ENCODE measurements at regions of chr5 and their contacts with region 1.

Region 1: DNA sequence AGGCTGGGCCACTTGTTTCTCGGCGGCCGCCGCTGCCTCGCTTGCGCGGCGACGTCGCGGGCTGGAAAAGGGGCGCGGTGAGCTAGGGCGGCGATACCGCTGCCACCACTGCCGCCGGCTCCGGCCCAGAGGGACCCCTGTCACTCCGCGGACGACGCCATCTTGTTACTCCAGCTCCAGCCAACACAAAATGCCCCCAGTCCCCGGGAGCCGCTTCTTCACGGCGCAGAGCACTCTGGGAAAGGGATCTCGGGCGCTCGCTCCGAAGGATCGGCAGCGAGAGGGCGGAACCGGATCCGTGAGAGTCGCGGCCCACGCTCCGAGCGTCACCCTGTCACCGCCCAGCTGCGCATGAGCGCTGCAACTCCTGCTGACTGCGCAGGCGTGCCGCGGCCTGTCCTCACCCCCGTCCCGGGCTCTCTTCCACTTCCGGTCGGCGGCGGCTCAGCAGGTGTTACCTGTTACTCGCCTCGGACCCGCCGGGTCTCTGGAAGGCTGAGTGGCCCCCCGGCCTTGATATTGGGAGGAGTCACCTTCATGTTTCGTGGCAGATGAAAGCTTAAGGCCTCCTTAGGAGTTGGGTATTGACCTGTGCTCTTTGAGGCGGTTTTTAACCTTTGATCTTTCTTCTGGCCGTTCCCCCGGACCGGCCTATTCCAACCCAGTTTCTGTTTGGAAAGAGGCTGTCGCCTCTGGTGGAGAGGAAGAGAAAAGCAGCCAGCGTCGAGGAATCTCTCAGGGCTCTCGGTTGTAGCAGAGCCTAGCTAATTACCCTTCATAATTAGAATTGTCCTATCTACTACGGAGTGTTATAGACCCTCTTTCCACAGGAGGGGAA is at the start of gene CSNK1A1:
- DNase-seq: peak; percentile 99
- H3K4me3 Mint-ChIP-seq: peak within 1 kb of the TSS; percentile 97
- H3K27ac Mint-ChIP-seq: peak within 1 kb of the TSS; percentile 99
- H3K4me1 Mint-ChIP-seq: peaks cover 33% of the 10 kb centered on the region
- H3K27me3 Mint-ChIP-seq: no peaks in the 10 kb centered on the region
- total RNA-seq, gene CSNK1A1: 165 to 170 TPM

Region 2: GRCh38 chr5:148383564-148384379 is 1167.6 kb before region 1 on chr5 and contains the start of gene FBXO38:
- CTCF ChIA-PET with region 1: no interaction called
- POLR2A ChIA-PET with region 1: no interaction called
- intact Hi-C with region 1: loop called (anchors 10 kb)
- DNase-seq: peak; percentile 98
- H3K4me3 Mint-ChIP-seq: peak within 1 kb of the TSS; percentile 86
- H3K27ac Mint-ChIP-seq: peak within 1 kb of the TSS; percentile 92
- H3K4me1 Mint-ChIP-seq: peaks cover 53% of the 10 kb centered on the region
- H3K27me3 Mint-ChIP-seq: no peaks in the 10 kb centered on the region
- total RNA-seq, gene FBXO38: 43.1 to 45.0 TPM

Region 3: DNA sequence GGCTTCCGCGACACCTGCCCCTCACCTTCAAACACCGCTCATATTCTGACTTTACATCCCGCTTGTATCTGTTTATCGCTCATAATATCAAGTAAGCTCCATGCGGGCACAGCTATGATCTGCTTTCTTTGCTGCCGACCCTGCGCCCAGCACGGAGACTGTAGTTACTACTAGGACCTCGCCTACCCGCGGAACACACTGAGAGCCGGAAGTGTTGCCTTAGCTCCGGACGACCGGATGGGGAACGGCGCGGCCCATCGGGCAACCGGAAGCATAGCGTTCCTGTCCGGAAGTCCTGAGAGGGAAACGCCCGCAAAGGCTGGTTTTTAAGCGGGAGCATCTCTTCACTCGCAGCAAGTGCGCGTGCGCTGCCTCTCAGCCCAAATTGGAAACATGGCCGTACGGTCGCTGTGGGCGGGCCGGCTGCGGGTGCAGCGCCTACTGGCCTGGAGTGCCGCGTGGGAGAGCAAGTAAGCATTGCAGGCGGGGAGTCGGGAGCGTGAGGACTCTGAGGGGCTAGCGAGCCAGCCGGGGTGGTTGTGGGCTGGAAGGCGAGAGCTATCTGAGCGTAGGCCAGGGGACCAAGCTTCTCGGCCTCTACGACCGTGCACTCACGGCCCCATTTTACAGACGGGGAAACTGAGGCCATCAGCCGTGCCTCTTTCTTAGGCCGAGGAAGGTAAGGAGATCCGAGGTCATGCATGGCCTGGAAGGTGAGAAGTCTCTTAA is 206.1 kb before region 1 on chr5 and contains the start of gene GRPEL2:
- CTCF ChIA-PET with region 1: interaction called, 5 read pairs
- POLR2A ChIA-PET with region 1: interaction called, 23 read pairs
- intact Hi-C with region 1: loop called (anchors 1 kb)
- DNase-seq: peak; percentile 97
- H3K4me3 Mint-ChIP-seq: peak within 1 kb of the TSS; percentile 97
- H3K27ac Mint-ChIP-seq: peak within 1 kb of the TSS; percentile 93
- H3K4me1 Mint-ChIP-seq: peaks cover 46% of the 10 kb centered on the region
- H3K27me3 Mint-ChIP-seq: no peaks in the 10 kb centered on the region
- total RNA-seq, gene GRPEL2: 32.9 to 37.2 TPM

Region 4: DNA sequence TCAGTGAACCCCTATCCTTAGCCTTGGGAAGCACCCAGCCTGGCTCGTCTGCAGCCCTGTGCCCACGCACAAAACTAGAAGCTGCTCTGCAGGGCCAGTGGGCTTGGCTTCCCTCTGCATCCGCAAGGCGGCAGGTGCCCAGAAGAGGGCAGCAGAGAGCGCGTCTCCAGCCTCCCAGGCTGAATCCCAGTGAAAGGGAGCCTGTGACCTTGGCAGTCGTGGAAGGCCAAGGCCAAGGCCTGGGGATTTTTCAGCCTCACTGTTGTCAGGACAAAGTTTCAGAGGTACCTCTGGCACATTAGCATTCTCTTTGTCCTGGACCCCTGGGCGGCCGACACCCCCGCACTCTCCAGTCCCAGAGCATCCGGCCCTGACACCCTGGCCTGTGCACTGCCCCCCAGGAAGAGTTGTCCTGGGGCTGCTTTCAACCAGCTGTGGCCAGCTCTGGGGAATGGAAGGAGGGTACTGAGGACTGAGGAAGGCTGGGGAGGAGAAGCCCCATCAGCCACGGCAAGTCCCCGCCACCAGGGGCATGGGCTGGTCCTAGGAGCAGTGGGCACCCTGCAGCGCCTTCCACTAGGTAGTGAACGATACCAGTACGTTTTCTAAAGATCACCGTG is 108.7 kb before region 1 on chr5:
- CTCF ChIA-PET with region 1: interaction called, 16 read pairs
- POLR2A ChIA-PET with region 1: interaction called, 10 read pairs
- intact Hi-C with region 1: no loop called
- DNase-seq: peak; percentile 85
- H3K4me3 Mint-ChIP-seq: no peak overlapping the region
- H3K27ac Mint-ChIP-seq: no peak overlapping the region
- H3K4me1 Mint-ChIP-seq: peaks cover 23% of the 10 kb centered on the region
- H3K27me3 Mint-ChIP-seq: no peaks in the 10 kb centered on the region

Region 5: DNA sequence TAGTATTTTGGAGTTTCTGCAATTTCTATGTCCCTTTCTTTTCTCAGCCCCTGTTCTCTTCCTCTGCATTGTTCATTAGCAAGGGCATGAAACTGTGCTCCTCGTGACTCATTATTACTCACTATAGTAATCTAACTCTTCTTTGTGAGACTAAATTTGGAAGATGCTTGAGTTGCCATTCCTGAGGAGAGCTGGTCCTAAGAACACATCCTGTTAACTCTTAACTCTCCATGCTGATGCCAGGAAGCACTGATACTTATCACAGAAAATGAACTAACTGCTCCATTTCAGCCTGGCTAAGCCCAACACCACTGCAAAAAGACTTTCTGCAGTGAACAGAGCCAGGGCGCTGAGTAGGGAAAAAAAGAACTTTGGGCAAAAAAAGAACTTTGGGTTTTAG is 10.4 kb after region 1 on chr5:
- CTCF ChIA-PET with region 1: interaction called, 35 read pairs
- POLR2A ChIA-PET with region 1: interaction called, 19 read pairs
- intact Hi-C with region 1: loop called (anchors 1 kb)
- DNase-seq: no peak
- H3K4me3 Mint-ChIP-seq: no peak overlapping the region
- H3K27ac Mint-ChIP-seq: peak overlapping the region; percentile 44
- H3K4me1 Mint-ChIP-seq: peaks cover 23% of the 10 kb centered on the region
- H3K27me3 Mint-ChIP-seq: no peaks in the 10 kb centered on the region

Region 6: DNA sequence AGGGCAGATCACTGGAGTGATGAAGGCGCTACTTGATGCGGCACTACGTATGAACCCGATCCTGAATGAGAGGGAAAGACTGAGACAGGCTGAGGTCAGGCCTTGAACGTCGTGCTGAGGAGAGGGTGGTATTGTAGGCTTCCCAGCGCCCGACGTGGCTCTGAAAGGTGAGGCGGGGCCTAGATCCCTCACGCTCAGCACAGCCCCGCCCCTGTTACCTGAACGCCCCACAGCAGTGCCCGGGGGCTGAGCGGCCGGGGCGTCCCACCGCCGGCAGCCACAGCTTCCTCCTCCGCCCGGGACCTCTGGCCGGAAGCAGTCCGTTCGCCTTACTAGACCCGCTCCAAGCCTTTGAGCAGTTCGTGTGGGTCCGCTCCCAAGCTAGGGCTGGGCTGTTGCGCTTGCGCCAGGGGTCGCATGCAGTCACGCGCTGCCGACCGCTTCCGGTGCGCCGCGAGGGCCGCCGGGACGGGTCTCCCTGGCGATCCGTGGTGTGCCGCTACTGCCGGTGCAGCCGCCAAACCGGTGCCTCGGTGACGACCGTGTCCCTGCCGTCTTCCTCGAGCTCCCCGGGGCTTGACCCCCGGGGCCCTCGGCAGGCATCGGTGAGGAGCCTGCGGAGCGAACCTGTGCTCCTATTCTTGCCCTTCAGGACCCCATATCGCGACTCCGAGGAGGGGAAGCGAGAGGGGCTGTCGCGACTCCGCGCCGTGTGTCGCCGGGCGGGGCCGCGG is 449.0 kb after region 1 on chr5 and contains the starts of genes HMGXB3 and TIGD6:
- CTCF ChIA-PET with region 1: no interaction called
- POLR2A ChIA-PET with region 1: no interaction called
- intact Hi-C with region 1: loop called (anchors 2 kb)
- DNase-seq: peak; percentile 93
- H3K4me3 Mint-ChIP-seq: peak within 1 kb of the TSS; percentile 86
- H3K27ac Mint-ChIP-seq: peak within 1 kb of the TSS; percentile 93
- H3K4me1 Mint-ChIP-seq: peaks cover 39% of the 10 kb centered on the region
- H3K27me3 Mint-ChIP-seq: no peaks in the 10 kb centered on the region
- total RNA-seq, gene HMGXB3: 29.4 to 31.3 TPM
- total RNA-seq, gene TIGD6: 2.5 to 2.6 TPM